Vagina (tissue), 2 donors: ENCODE measurements at regions of chr16 and their contacts with region 1.

Region 1: GRCh38 chr16:381789-382717 is at the start of gene PGAP6:
- DNase-seq: no peak
- H3K4me3 ChIP-seq: peak within 1 kb of the TSS; percentile 84 to 98
- H3K27ac ChIP-seq: peak within 1 kb of the TSS; percentile 68
- H3K4me1 ChIP-seq: peaks cover 44% of the 10 kb centered on the region
- H3K27me3 ChIP-seq: no peaks in the 10 kb centered on the region
- CTCF ChIP-seq: no peak
- POLR2A ChIP-seq: peak in 1 of 2 donors; percentile 5
- total RNA-seq, gene PGAP6: 38.3 TPM

Region 2: DNA sequence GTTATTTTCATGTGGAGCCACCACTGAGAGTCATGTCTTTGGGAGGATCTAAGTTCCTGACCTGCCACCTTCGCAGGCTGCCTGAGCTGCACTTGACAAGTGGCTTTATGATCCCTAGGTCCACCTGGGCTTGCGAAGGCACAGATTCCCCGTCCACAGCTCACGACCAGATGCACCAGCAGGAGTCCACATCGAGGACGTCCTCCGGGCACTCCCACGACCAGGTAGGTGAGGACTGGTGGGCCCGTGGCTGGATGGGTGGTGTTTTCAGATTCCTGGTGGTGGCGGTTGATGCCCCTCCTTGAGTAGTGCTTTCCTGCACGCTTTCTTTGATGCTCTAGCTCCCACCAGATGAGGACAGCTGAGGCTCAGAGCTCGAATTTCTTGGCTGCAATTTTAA is 132.6 kb before region 1 on chr16:
- intact Hi-C with region 1: no loop called
- DNase-seq: no peak
- H3K4me3 ChIP-seq: no peak overlapping the region
- H3K27ac ChIP-seq: no peak overlapping the region
- H3K4me1 ChIP-seq: no peaks in the 10 kb centered on the region
- H3K27me3 ChIP-seq: no peaks in the 10 kb centered on the region
- CTCF ChIP-seq: no peak
- POLR2A ChIP-seq: no peak

Region 3: GRCh38 chr16:324451-325334 is 57.4 kb before region 1 on chr16:
- intact Hi-C with region 1: no loop called
- DNase-seq: no peak
- H3K4me3 ChIP-seq: peak overlapping the region in 1 of 2 donors; percentile 12
- H3K27ac ChIP-seq: no peak overlapping the region
- H3K4me1 ChIP-seq: peaks cover 36% of the 10 kb centered on the region
- H3K27me3 ChIP-seq: no peaks in the 10 kb centered on the region
- CTCF ChIP-seq: no peak
- POLR2A ChIP-seq: no peak

Region 4: GRCh38 chr16:414395-415169 is 32.5 kb after region 1 on chr16:
- intact Hi-C with region 1: no loop called
- DNase-seq: no peak
- H3K4me3 ChIP-seq: no peak overlapping the region
- H3K27ac ChIP-seq: no peak overlapping the region
- H3K4me1 ChIP-seq: no peaks in the 10 kb centered on the region
- H3K27me3 ChIP-seq: no peaks in the 10 kb centered on the region
- CTCF ChIP-seq: no peak
- POLR2A ChIP-seq: no peak

Region 5: DNA sequence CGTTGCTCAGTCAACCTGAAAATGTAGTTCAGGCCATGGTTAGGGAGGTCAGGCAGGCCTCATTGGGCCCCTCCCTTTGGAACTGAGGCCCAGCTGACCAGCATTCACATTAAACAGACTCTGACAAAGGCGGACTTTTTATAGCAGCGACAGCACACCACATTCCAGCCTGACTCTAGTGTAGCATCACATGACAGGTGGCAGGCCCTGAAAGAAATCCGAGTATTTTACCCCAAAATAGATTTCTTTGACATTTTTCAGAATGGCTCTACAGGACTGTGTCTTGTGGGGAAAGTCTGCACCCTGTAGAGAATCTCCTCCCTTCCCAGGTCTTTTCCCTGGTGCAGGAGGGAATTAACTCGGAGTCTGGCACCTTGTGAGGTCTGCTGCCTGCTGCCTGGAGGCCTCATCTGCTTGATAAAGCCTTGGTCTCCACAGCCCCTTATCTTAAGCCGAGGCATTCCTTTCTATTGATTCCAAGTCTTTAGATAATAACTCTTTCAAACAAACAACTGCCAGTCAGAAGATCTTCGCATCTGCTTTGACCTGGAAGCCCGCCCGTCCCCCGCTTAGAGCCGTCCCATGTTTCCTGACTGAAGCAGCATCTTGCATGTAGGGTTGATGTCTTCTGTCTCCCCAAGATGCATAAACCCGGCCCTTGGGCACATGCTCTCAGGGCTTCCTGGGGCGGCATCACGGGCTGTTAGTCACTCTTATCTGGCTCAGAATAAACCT is 101.5 kb after region 1 on chr16:
- intact Hi-C with region 1: no loop called
- DNase-seq: no peak
- H3K4me3 ChIP-seq: no peak overlapping the region
- H3K27ac ChIP-seq: no peak overlapping the region
- H3K4me1 ChIP-seq: no peaks in the 10 kb centered on the region
- H3K27me3 ChIP-seq: no peaks in the 10 kb centered on the region
- CTCF ChIP-seq: no peak
- POLR2A ChIP-seq: no peak

Region 6: DNA sequence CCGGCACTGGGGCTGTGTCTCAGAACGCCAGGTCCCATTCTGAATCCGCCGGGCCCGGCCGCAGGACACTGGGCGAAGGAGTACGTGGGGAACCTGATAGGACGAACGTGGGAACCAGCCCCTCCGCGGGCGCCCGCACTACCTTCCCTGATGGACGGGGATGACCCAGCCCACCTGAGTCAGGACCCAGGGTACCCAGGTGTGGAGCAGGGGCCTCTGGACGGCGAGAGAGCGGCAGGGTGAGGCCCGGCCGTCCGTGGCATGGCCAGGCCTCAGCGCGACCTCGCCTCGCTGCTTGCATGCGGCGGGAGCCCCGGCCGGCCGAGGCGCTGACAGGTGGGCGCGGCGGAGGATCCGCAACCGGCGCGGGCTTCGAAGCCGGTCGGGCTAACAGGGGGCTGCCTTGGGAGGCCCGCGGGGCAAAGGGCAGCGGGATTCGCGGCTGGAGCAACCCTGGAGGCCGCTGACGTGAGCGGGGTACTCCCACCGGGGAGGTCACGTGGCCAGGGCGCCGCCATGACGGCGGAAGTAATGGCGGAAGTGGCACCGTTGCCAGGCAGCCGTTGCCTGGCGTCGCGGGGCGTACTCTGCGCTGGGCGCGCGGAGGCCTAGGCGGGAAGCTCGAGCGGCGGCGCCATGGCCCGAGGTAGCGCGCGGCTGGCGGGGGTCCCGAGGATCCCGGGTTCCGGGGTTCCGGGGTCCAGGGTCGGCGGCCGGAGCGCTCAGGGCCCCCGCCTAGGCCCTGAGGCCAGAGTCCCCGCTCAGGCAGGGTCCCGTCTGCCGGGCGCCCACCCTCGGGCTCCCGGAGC is 266.9 kb after region 1 on chr16 and contains the start of gene WDR90:
- intact Hi-C with region 1: loop called (anchors 10 kb)
- DNase-seq: no peak
- H3K4me3 ChIP-seq: peak within 1 kb of the TSS; percentile 62 to 72
- H3K27ac ChIP-seq: peak within 1 kb of the TSS; percentile 75
- H3K4me1 ChIP-seq: peaks cover 43% of the 10 kb centered on the region
- H3K27me3 ChIP-seq: no peaks in the 10 kb centered on the region
- CTCF ChIP-seq: no peak
- POLR2A ChIP-seq: peak in 1 of 2 donors; percentile 39
- total RNA-seq, gene WDR90: 34.9 TPM